WTC11 (cell line): ENCODE measurements at regions of chr10 and their contacts with region 1.

Region 1: DNA sequence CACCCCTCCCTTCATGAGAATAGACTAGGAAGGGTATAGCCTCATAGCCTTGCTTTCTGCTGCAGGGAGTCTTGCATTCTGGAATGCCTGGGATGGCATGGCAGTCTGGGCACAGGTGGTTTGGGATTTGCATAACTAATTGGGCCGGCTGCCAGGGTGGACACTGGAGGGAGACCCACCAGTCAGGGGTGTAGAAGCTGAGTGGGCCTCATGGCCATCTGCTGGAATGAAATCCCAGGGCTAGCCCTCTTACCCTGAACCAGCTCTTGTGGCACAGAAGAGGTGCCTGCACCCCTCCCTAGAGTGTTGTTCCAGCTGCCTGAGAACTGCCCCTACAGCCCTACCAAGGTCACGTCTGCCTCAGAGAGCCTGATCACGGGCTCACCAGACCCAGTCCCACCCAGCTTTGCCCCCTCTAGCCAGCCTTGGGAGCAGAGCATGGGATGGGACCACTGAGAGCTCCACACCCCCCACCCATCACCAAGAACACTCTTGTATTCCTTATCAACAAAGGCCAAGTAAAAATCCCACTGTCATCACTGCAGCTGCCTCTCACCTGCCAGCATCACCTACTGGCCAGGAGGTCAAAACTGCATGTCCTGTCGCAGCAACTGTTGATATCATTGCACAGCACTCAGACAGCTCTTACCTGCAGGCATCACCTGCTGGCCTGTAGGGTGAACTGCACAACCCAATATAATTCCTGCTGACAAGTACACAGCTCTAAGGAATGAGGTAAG is 148.9 kb downstream of the ZEB1 start:
- DNase-seq: peak; percentile 61
- ATAC-seq: peak; percentile 100
- H3K4me3 Mint-ChIP-seq: no peak overlapping the region
- H3K27ac Mint-ChIP-seq: no peak overlapping the region
- H3K4me1 Mint-ChIP-seq: peaks cover 8% of the 10 kb centered on the region
- H3K27me3 Mint-ChIP-seq: no peaks in the 10 kb centered on the region; the same call in 1 of the 2 replicates
- CTCF ChIP-seq: peak; percentile 77

Region 2: DNA sequence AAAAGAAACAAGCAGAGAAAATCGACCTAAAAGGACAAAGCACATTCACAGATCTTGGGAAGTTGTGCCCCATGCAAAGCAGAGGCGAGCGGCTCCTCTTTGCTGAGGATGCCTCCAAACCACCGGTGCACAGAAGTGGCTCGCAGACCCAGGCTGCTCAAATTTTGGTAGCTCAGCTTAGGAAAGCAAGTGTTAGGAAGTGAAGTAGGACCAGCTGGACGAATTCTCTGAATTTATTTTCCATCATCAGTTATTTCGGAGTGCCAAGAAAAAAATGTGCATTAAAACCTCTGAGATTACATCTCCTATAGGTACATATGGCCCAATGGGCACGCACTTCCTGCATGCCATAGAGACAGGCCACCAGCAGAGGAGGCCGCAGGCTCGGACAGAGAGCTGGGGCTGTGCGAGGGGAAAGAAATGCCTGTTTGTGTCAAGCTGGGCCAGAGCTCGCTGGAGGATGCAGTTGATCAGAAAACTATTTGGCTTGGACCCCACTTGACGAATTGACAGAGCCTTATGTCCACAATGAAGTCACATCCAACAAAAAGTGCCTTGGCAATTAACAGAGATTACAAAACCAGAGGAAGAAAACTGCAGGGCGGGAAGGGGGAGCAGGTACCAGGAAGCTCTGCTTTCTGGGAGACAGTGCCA is 716.2 kb before region 1 on chr10:
- CTCF ChIA-PET with region 1: interaction called, 28 read pairs
- POLR2A ChIA-PET with region 1: no interaction called
- DNase-seq: peak; percentile 80
- ATAC-seq: peak; percentile 98
- H3K4me3 Mint-ChIP-seq: no peak overlapping the region
- H3K27ac Mint-ChIP-seq: no peak overlapping the region
- H3K4me1 Mint-ChIP-seq: peaks cover 5% of the 10 kb centered on the region
- H3K27me3 Mint-ChIP-seq: no peaks in the 10 kb centered on the region; the same call in none of the 2 replicates
- CTCF ChIP-seq: peak; percentile 67

Region 3: DNA sequence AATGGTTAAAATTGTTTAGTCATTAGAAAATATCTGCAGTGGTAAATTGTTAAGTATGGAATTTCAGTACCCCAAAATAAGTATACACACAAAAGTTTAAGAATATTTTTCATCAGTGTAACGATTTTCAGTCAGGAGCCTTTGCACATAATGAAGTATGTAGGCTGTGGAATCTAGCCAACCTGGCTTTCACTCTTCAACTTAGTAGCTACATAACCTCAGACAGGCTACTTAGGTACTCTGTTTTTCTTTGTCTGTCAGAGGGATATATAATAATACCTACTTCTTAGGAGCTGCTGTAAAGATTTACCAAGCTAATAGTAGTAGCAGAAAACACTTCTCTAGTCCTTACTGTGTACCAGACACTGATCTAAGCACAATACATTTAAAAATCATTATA is 11.5 kb before region 1 on chr10:
- CTCF ChIA-PET with region 1: interaction called, 11 read pairs
- POLR2A ChIA-PET with region 1: no interaction called
- DNase-seq: no peak
- ATAC-seq: no peak
- H3K4me3 Mint-ChIP-seq: no peak overlapping the region
- H3K27ac Mint-ChIP-seq: no peak overlapping the region
- H3K4me1 Mint-ChIP-seq: no peaks in the 10 kb centered on the region
- H3K27me3 Mint-ChIP-seq: peaks cover 5% of the 10 kb centered on the region; the same call in 1 of the 2 replicates
- CTCF ChIP-seq: no peak

Region 4: DNA sequence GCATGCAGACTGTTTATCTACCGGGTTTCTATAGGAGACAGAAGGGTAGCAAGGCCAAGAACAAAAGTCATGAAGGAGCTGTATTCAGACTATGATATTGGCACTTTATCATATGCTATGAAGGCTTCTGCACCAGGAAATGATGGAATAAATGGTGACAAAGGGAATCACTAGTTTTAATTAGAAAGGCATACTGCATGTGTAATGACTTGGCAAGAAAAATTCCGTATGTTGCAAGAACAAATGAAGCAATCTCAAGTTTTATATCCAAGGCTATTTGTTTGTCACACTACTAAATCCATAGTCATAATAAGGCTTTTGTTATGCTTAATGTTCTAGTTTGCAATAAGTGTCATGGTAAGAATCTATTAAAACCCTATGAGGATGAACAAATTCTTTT is 81.9 kb after region 1 on chr10:
- CTCF ChIA-PET with region 1: no interaction called
- POLR2A ChIA-PET with region 1: no interaction called
- DNase-seq: no peak
- ATAC-seq: no peak
- H3K4me3 Mint-ChIP-seq: no peak overlapping the region
- H3K27ac Mint-ChIP-seq: no peak overlapping the region
- H3K4me1 Mint-ChIP-seq: peaks cover under 1% of the 10 kb centered on the region; the same call in 1 of the 2 replicates
- H3K27me3 Mint-ChIP-seq: no peaks in the 10 kb centered on the region; the same call in none of the 2 replicates
- CTCF ChIP-seq: no peak